ENCODE measurements at regions of chr7 and their contacts with region 1.

Region 1: GRCh38 chr7:23679898-23680413 is at the start of gene FAM221A:
- DNase-seq: peak; percentile 93
- ATAC-seq: peak; percentile 100
- total RNA-seq, gene FAM221A: 3.0 to 4.1 TPM

Region 2: GRCh38 chr7:23597094-23598091 is 82.6 kb before region 1 on chr7 and contains the start of gene CCDC126:
- intact Hi-C with region 1: loop called in 1 of 2 experiments (anchors 5 kb)
- DNase-seq: peak; percentile 94
- ATAC-seq: peak; percentile 97 to 99
- total RNA-seq, gene CCDC126: 8.4 to 10.9 TPM

Region 3: DNA sequence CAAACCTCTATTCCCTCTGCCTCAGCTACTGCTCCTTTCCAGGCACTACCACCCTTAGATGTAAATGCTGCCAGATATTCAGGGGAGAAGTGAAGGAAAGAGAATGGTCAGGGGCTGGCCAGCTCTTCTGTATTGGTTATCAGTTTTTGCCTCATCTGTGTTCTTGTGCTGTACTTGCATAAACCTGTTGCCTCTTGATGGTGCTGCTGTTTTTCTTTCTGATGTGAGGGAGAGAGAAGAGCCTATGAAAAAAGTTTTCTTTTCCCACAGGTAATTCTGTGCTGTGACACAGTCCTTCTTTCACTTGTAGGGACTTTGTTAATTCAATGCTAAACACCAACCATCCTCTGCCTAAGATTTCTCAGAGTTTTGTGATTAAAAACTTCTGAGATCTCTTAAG is 87.6 kb after region 1 on chr7:
- intact Hi-C with region 1: no loop called
- DNase-seq: no peak
- ATAC-seq: no peak

Measured in left cardiac atrium (tissue), 4 donors.